ENCODE measurements at regions of chr1 and their contacts with region 1.

Region 1: GRCh38 chr1:34037109-34037508 is 127.9 kb downstream of the CSMD2 start:
- DNase-seq: no peak
- H3K4me3 ChIP-seq: no peak overlapping the region
- H3K27ac ChIP-seq: no peak overlapping the region
- H3K4me1 ChIP-seq: no peaks in the 10 kb centered on the region
- H3K27me3 ChIP-seq: 0 out of 2 replicates have a peak, but pooled peaks cover 8% of the 10 kb centered on the region
- CTCF ChIP-seq: no peak

Region 2: GRCh38 chr1:35259561-35259960 is 1222.5 kb after region 1 on chr1:
- CTCF ChIA-PET with region 1: no interaction called
- POLR2A ChIA-PET with region 1: interaction called, 22 read pairs
- intact Hi-C with region 1: no loop called
- DNase-seq: no peak
- H3K4me3 ChIP-seq: no peak overlapping the region
- H3K27ac ChIP-seq: no peak overlapping the region
- H3K4me1 ChIP-seq: peaks cover 4% of the 10 kb centered on the region
- H3K27me3 ChIP-seq: no peaks in the 10 kb centered on the region
- CTCF ChIP-seq: no peak